Right ventricle myocardium inferior (tissue), 1 donor: ENCODE measurements at regions of chr15 and their contacts with region 1.

Region 1: DNA sequence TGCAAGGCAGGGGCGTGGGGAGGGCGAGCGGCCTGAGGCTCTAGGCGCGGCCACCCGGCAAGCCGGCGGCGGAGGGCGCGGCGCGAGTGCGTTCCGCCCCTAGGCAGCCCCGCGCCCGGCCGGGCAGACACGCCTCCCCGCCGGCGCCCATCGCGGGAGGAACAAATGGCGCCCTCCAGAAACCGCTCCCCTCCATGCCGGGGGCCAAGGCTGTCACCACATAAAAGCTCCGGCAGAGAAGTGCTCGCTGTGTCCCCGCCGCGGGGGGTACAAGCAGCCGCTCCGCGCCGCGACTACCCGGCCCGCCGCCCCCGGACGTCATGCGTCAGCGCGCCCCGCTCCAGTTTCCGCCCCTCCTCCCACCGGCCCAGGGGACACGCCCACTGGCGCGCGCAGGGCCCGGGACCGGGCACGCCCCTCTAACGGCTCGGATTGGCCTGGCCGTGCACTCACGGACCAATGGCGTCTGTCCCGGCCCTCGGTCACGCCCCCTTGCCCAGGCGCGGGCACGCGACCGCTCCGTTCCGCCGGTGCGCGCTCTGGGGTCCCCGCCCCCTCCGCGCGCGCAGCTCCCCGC is 391 bp upstream of the KLF13 start:
- DNase-seq: peak; percentile 99
- ATAC-seq: peak; percentile 91

Region 2: GRCh38 chr15:31236184-31237042 is 89.8 kb before region 1 on chr15:
- intact Hi-C with region 1: loop called (anchors 1 kb)
- DNase-seq: peak; percentile 80
- ATAC-seq: peak; percentile 92

Region 3: GRCh38 chr15:31365655-31366127 is 39.4 kb after region 1 on chr15:
- intact Hi-C with region 1: loop called (anchors 1 kb)
- DNase-seq: peak; percentile 98
- ATAC-seq: peak; percentile 90

Region 4: DNA sequence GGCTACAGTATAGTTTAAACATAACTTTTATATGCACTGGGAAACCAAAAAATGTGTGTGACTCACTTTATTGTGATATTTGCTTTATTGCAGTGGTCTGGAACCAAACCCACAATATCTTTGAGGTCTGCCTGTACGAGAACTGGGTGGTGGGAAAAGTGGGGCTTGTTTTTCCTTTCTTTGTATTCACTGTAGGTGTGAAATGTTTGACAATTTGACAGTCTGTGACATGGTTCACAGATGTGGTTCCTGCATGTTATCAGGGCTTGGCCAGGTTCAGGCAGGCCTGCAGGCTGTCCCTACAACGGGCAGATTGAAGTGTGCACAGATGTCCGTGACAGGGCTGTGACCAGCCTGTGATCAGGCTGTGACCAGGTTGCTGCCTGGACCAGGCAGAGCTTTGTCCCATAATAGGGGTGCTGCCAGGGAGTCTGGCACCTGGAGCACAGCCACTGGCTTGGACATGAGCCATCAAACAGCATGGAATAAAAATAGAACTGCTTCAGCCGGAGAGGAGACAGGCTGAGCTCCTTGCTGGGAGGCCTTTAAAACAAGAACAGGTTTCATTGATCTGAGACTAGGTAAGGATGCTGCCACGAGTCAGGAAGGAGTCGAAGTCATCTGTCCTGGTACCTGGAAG is 61.4 kb after region 1 on chr15:
- intact Hi-C with region 1: no loop called
- DNase-seq: peak; percentile 79
- ATAC-seq: peak; percentile 82

Region 5: GRCh38 chr15:31435261-31435911 is 109.1 kb after region 1 on chr15:
- intact Hi-C with region 1: loop called (anchors 1 kb)
- DNase-seq: peak; percentile 87
- ATAC-seq: peak; percentile 86